Transverse colon (tissue), 4 donors: ENCODE measurements at regions of chr2 and their contacts with region 1.

Region 1: DNA sequence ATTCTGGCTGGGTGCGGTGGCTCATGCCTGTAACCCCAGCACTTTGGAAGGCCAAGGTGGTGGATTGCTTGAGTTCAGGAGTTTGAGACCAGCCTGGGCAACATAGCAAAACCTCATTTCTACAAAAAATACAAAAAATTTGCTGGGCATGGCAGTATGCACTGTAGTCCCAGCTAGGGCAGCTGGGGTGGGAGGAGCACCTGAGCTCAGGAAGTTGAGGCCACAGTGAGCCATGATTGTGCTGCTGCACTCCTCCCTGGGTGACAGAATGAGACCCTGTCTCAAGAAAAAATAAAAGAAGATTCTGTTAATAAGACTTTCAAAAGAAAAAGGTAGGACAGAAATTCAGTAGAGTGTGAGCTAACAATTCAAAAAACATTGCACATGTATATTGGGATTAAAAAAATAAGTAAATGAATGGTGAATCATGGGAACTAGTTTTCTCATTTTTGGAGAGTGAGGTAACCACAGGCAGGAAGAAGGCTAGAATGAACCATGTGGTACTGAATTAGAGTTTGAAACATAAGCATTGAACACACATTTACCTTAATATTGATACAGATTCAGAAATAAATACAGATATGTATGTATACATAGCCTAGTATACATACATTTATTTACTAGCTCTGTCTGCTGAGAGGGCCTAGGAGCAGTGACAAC is 53.5 kb downstream of the NCOA1 start:
- DNase-seq: no peak
- H3K4me3 ChIP-seq: no peak overlapping the region
- H3K27ac ChIP-seq: no peak overlapping the region
- H3K4me1 ChIP-seq: peaks cover 0 to 6% (median 4%) of the 10 kb centered on the region in 4 donors
- H3K27me3 ChIP-seq: no peaks in the 10 kb centered on the region
- CTCF ChIP-seq: no peak
- EP300 ChIP-seq: no peak
- POLR2A ChIP-seq: no peak

Region 2: GRCh38 chr2:24334245-24334633 is 210.3 kb before region 1 on chr2:
- in situ Hi-C with region 1: no loop called
- intact Hi-C with region 1: no loop called
- DNase-seq: no peak
- H3K4me3 ChIP-seq: no peak overlapping the region
- H3K27ac ChIP-seq: no peak overlapping the region
- H3K4me1 ChIP-seq: peaks cover 0 to 39% (median 11%) of the 10 kb centered on the region in 4 donors
- H3K27me3 ChIP-seq: no peaks in the 10 kb centered on the region
- CTCF ChIP-seq: no peak
- EP300 ChIP-seq: no peak
- POLR2A ChIP-seq: no peak

Region 3: GRCh38 chr2:24429197-24430074 is 115.2 kb before region 1 on chr2:
- in situ Hi-C with region 1: no loop called
- intact Hi-C with region 1: loop called (anchors 1 kb)
- DNase-seq: no peak
- H3K4me3 ChIP-seq: no peak overlapping the region
- H3K27ac ChIP-seq: no peak overlapping the region
- H3K4me1 ChIP-seq: no peaks in the 10 kb centered on the region
- H3K27me3 ChIP-seq: no peaks in the 10 kb centered on the region
- CTCF ChIP-seq: no peak
- EP300 ChIP-seq: no peak
- POLR2A ChIP-seq: no peak